B cell (primary cell): ENCODE measurements at regions of chr14 and their contacts with region 1.

Region 1: GRCh38 chr14:105045710-105046326 is 19.4 kb downstream of the GPR132 start:
- DNase-seq: peak; percentile 95
- ATAC-seq: peak; percentile 94
- H3K4me3 ChIP-seq: no peak overlapping the region
- H3K4me3 Mint-ChIP-seq: peak overlapping the region; percentile 1
- H3K27ac ChIP-seq: peak overlapping the region; percentile 11 to 24
- H3K27ac Mint-ChIP-seq: peak overlapping the region; percentile 28
- H3K4me1 ChIP-seq: peaks cover 5 to 18% of the 10 kb centered on the region in 2 donors
- H3K4me1 Mint-ChIP-seq: peaks cover 10% of the 10 kb centered on the region
- H3K27me3 ChIP-seq: peaks cover 0 to 9% (median 0%) of the 10 kb centered on the region in 4 experiments
- H3K27me3 Mint-ChIP-seq: no peaks in the 10 kb centered on the region
- CTCF ChIP-seq: peak; percentile 100

Region 2: GRCh38 chr14:104895786-104896661 is 149.8 kb before region 1 on chr14:
- CTCF ChIA-PET with region 1: interaction called, 30 read pairs
- POLR2A ChIA-PET with region 1: no interaction called
- intact Hi-C with region 1: no loop called
- DNase-seq: peak; percentile 18
- ATAC-seq: no peak
- H3K4me3 ChIP-seq: no peak overlapping the region
- H3K4me3 Mint-ChIP-seq: no peak overlapping the region
- H3K27ac ChIP-seq: no peak overlapping the region
- H3K27ac Mint-ChIP-seq: no peak overlapping the region
- H3K4me1 ChIP-seq: peaks cover 0 to 5% of the 10 kb centered on the region in 2 donors
- H3K4me1 Mint-ChIP-seq: peaks cover 4% of the 10 kb centered on the region
- H3K27me3 ChIP-seq: peaks cover 0 to 4% (median 0%) of the 10 kb centered on the region in 4 experiments
- H3K27me3 Mint-ChIP-seq: peaks cover 5% of the 10 kb centered on the region
- CTCF ChIP-seq: no peak

Region 3: DNA sequence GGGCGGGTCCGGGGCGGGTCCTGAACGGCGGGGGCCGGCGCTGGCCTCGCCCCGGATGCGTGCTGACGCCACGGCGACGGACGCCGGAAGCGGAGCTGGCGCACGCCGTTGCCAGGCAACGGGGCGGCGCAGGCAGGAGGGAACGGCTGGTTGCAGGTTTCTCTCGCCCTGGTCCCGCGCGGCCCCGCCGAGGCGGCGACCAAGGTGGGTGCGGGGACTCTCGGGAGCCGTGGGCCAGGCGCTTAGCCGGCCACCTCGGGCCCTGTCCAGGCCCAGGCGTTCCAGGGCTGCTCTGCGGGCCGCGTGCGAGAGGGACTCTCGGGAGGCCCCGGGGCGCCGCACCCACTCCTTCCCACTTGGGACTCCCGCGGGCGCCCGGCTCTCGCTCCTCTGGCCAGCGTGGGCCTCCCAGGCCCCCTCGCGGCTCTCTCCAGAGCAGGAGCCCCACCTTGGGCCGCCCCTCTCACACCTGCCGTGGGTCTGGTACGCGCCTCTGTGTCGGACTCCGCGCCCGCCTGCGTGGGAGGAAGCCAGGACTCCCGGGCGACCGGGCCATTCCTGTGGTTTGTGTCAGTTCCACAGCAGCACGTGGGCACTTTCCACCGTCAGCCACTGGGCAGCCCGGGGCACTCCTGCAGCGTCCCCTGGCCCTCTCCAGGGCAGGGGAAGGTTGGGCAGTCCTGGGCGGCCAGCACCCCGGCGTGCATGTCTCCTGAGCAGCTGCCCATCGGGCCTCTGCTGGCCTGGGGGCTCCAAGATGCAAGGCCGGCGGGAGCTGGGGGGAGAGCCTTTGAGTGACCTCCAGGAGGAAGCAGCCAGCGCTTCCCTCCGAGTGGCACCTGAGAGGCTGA is 59.9 kb before region 1 on chr14 and contains the start of gene CLBA1:
- CTCF ChIA-PET with region 1: interaction called, 29 read pairs
- POLR2A ChIA-PET with region 1: interaction called, 7 read pairs
- intact Hi-C with region 1: loop called (anchors 2 kb)
- DNase-seq: peak; percentile 95
- ATAC-seq: peak; percentile 92
- H3K4me3 ChIP-seq: peak within 1 kb of the TSS in 4 of 5 experiments; percentile 47 to 78 (median 62)
- H3K4me3 Mint-ChIP-seq: peak within 1 kb of the TSS; percentile 79
- H3K27ac ChIP-seq: peak within 1 kb of the TSS in 1 of 2 donors; percentile 73
- H3K27ac Mint-ChIP-seq: peak within 1 kb of the TSS; percentile 67
- H3K4me1 ChIP-seq: peaks cover 7 to 13% of the 10 kb centered on the region in 2 donors
- H3K4me1 Mint-ChIP-seq: peaks cover 7% of the 10 kb centered on the region
- H3K27me3 ChIP-seq: peaks cover 0 to 11% (median 5%) of the 10 kb centered on the region in 4 experiments
- H3K27me3 Mint-ChIP-seq: peaks cover 4% of the 10 kb centered on the region
- CTCF ChIP-seq: no peak
- total RNA-seq, gene CLBA1: 5.3 and 5.5 TPM in 2 replicates

Region 4: DNA sequence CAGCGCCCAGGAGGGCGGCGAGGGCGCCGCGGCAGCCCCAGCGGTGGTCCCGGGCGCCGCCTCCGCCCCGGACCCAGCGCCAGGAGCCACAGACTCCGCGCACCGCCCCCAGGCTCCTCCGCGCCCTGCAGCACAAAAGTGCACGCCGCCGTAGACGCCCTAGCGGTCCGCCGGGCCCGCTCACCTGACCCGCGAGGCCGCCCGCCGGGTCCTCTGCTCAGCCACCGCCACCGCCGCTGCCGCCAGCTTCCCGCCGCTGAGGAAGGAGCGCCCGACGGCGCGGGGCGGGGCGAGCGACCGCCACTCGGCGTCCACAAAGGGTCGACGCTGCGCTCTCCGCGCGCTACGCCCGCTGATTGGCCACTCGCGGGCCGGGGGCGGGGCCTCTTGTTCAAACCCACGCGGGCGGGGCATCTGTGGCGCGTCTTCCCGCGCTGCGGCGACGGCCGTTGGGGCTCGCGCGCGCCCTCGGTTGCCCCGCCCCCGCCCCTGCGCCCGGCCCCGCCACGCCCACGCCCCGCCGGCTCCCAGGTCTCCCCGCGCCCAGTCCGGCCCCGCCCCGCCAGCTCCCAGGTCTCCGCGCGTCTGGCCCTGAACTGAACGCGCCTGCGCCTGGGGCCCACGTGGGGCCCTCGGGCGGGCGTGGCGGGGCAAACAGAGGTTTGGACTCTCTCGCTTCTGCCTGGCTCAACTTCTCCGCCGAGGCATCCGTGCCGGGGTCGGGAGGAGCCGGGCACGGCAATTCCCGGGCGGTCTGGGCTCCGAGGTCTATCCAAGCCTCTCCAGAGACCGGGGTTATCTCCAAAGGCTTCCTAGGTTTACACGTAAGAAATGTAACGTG is 24.8 kb before region 1 on chr14 and contains the start of gene CDCA4:
- CTCF ChIA-PET with region 1: interaction called, 43 read pairs
- POLR2A ChIA-PET with region 1: interaction called, 4 read pairs
- intact Hi-C with region 1: loop called (anchors 1 kb)
- DNase-seq: peak; percentile 99
- ATAC-seq: peak; percentile 85
- H3K4me3 ChIP-seq: peak within 1 kb of the TSS; percentile 60 to 75 (median 68)
- H3K4me3 Mint-ChIP-seq: peak within 1 kb of the TSS; percentile 94
- H3K27ac ChIP-seq: peak within 1 kb of the TSS; percentile 64 to 77
- H3K27ac Mint-ChIP-seq: peak within 1 kb of the TSS; percentile 92
- H3K4me1 ChIP-seq: peaks cover 17 to 38% of the 10 kb centered on the region in 2 donors
- H3K4me1 Mint-ChIP-seq: peaks cover 58% of the 10 kb centered on the region
- H3K27me3 ChIP-seq: no peaks in the 10 kb centered on the region
- H3K27me3 Mint-ChIP-seq: no peaks in the 10 kb centered on the region
- CTCF ChIP-seq: no peak
- total RNA-seq, gene CDCA4: 10.7 and 11.7 TPM in 2 replicates

Region 5: GRCh38 chr14:105034314-105035039 is 11.3 kb before region 1 on chr14:
- CTCF ChIA-PET with region 1: interaction called, 31 read pairs
- POLR2A ChIA-PET with region 1: no interaction called
- intact Hi-C with region 1: no loop called
- DNase-seq: no peak
- ATAC-seq: no peak
- H3K4me3 ChIP-seq: no peak overlapping the region
- H3K4me3 Mint-ChIP-seq: peak overlapping the region; percentile 37
- H3K27ac ChIP-seq: no peak overlapping the region
- H3K27ac Mint-ChIP-seq: peak overlapping the region; percentile 91
- H3K4me1 ChIP-seq: peaks cover 5 to 6% of the 10 kb centered on the region in 2 donors
- H3K4me1 Mint-ChIP-seq: peaks cover 13% of the 10 kb centered on the region
- H3K27me3 ChIP-seq: no peaks in the 10 kb centered on the region
- H3K27me3 Mint-ChIP-seq: no peaks in the 10 kb centered on the region
- CTCF ChIP-seq: no peak